Naive thymus-derived CD4-positive, alpha-beta T cell (primary cell): ENCODE measurements at regions of chr3 and their contacts with region 1.

Region 1: GRCh38 chr3:100316641-100317069 is 17.9 kb upstream of the NIT2 start:
- DNase-seq: peak in 7 of 9 donors; percentile 13 to 60 (median 54)
- ATAC-seq: peak; percentile 95
- H3K4me3 ChIP-seq: no peak overlapping the region
- H3K4me3 Mint-ChIP-seq: peak overlapping the region in 6 of 10 donors; percentile 32 to 67 (median 50)
- H3K27ac ChIP-seq: no peak overlapping the region
- H3K27ac Mint-ChIP-seq: peak overlapping the region in 6 of 9 donors; percentile 57 to 87 (median 70)
- H3K4me1 ChIP-seq: no peaks in the 10 kb centered on the region
- H3K4me1 Mint-ChIP-seq: peaks cover 0 to 19% (median 14%) of the 10 kb centered on the region in 7 donors
- H3K27me3 ChIP-seq: no peaks in the 10 kb centered on the region
- H3K27me3 Mint-ChIP-seq: no peaks in the 10 kb centered on the region

Region 2: DNA sequence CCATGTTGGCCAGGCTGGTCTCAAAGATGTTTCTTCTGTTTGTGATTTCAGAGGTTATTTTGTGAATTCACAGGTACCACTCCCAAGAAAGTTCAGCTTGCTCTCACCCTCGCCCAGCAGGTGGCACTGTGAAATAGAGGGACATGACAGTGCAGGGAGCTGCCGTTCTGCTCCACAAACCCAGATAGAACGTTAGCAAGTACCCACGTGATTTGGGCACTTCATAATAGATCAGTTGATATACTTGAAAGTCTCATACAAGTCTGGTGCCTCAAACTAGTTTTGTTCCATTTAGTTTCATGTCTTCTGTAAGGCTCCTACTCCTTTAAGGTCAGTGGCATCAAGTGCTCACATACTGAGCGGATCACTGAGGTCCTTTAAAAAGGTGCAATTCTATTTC is 247.8 kb before region 1 on chr3:
- CTCF ChIA-PET with region 1: no interaction called
- POLR2A ChIA-PET with region 1: no interaction called
- intact Hi-C with region 1: loop called (anchors 2 to 5 kb)
- DNase-seq: peak; percentile 52 to 79 (median 70)
- ATAC-seq: peak; percentile 95
- H3K4me3 ChIP-seq: no peak overlapping the region
- H3K4me3 Mint-ChIP-seq: peak overlapping the region in 2 of 10 donors; percentile 29 to 40
- H3K27ac ChIP-seq: no peak overlapping the region
- H3K27ac Mint-ChIP-seq: peak overlapping the region in 2 of 9 donors; percentile 46 to 53
- H3K4me1 ChIP-seq: peaks cover 9 to 16% of the 10 kb centered on the region in 2 donors
- H3K4me1 Mint-ChIP-seq: peaks cover 17 to 47% (median 33%) of the 10 kb centered on the region in 7 donors
- H3K27me3 ChIP-seq: no peaks in the 10 kb centered on the region
- H3K27me3 Mint-ChIP-seq: no peaks in the 10 kb centered on the region

Region 3: GRCh38 chr3:100277255-100277800 is 39.3 kb before region 1 on chr3:
- CTCF ChIA-PET with region 1: no interaction called
- POLR2A ChIA-PET with region 1: no interaction called
- intact Hi-C with region 1: no loop called
- DNase-seq: no peak
- ATAC-seq: no peak
- H3K4me3 ChIP-seq: no peak overlapping the region
- H3K4me3 Mint-ChIP-seq: no peak overlapping the region
- H3K27ac ChIP-seq: no peak overlapping the region
- H3K27ac Mint-ChIP-seq: peak overlapping the region in 3 of 9 donors; percentile 2 to 54 (median 22)
- H3K4me1 ChIP-seq: no peaks in the 10 kb centered on the region
- H3K4me1 Mint-ChIP-seq: peaks cover 0 to 43% (median 24%) of the 10 kb centered on the region in 7 donors
- H3K27me3 ChIP-seq: no peaks in the 10 kb centered on the region
- H3K27me3 Mint-ChIP-seq: no peaks in the 10 kb centered on the region

Region 4: GRCh38 chr3:100463002-100463401 is 146.3 kb after region 1 on chr3:
- CTCF ChIA-PET with region 1: no interaction called
- POLR2A ChIA-PET with region 1: no interaction called
- intact Hi-C with region 1: loop called in 1 of 2 experiments (anchors 1 kb)
- DNase-seq: no peak
- ATAC-seq: peak; percentile 75
- H3K4me3 ChIP-seq: no peak overlapping the region
- H3K4me3 Mint-ChIP-seq: peak overlapping the region in 1 of 10 donors; percentile 18
- H3K27ac ChIP-seq: no peak overlapping the region
- H3K27ac Mint-ChIP-seq: no peak overlapping the region
- H3K4me1 ChIP-seq: no peaks in the 10 kb centered on the region
- H3K4me1 Mint-ChIP-seq: peaks cover 0 to 19% (median 0%) of the 10 kb centered on the region in 7 donors
- H3K27me3 ChIP-seq: no peaks in the 10 kb centered on the region
- H3K27me3 Mint-ChIP-seq: peaks cover 0 to 8% (median 3%) of the 10 kb centered on the region in 5 donors

Region 5: GRCh38 chr3:100590114-100590839 is 273.6 kb after region 1 on chr3:
- CTCF ChIA-PET with region 1: interaction called, 19 read pairs
- POLR2A ChIA-PET with region 1: interaction called, 3 read pairs
- intact Hi-C with region 1: loop called (anchors 1 kb)
- DNase-seq: peak; percentile 24 to 73 (median 61)
- ATAC-seq: peak; percentile 98
- H3K4me3 ChIP-seq: no peak overlapping the region
- H3K4me3 Mint-ChIP-seq: peak overlapping the region in 7 of 10 donors; percentile 13 to 77 (median 60)
- H3K27ac ChIP-seq: no peak overlapping the region
- H3K27ac Mint-ChIP-seq: no peak overlapping the region
- H3K4me1 ChIP-seq: no peaks in the 10 kb centered on the region
- H3K4me1 Mint-ChIP-seq: peaks cover 0 to 8% (median 4%) of the 10 kb centered on the region in 7 donors
- H3K27me3 ChIP-seq: no peaks in the 10 kb centered on the region
- H3K27me3 Mint-ChIP-seq: peaks cover 0 to 12% (median 0%) of the 10 kb centered on the region in 5 donors